ENCODE measurements at regions of chr12 and their contacts with region 1.

Region 1: DNA sequence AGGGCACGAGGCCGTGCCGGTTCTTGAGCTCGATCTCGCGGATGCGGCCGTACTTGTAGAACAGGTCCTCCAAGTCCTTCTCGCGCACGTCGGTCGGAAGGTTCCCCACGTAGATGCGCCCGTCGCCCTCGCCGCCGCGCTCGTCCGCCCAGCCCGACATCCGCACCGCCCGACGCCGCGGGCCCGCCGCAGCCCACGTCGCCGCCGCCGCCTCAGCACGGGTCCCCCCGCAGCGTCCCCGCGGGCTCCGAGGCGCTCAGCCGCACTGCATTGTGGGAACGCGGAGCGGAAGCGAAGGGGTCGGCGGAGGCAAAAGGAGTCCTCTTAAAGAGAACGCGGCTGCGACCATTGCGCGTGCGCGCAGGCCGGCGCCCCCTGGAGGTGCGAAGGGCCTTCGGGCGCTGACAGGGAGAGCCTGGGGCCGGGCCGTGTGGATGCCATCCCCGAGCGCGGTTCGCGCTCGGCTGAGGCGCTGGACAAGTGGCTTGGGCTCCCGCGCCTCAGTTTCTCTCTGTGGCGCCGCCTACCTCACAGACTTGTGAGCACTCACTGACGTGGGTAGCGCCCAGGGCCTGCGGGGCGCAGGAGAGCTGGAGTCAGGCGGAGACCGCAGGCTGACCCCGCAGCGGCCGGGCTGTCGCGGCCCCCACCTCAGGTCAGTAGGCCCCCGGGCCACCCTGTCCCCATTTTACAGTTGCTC is at the start of gene SRSF9:
- DNase-seq: peak; percentile 89 to 99
- H3K4me3 ChIP-seq: peak within 1 kb of the TSS; percentile 76 to 97 (median 78)
- H3K27ac ChIP-seq: peak within 1 kb of the TSS; percentile 96
- H3K4me1 ChIP-seq: peaks cover 0 to 5% (median 0%) of the 10 kb centered on the region in 4 experiments; a peak in 2 of 7 replicates
- H3K27me3 ChIP-seq: no peaks in the 10 kb centered on the region
- CTCF ChIP-seq: peak; percentile 73 to 86 (median 78)
- EP300 ChIP-seq: no peak
- POLR2A ChIP-seq: peak; percentile 66 to 89
- RAD21 ChIP-seq: peak in 1 of 2 experiments; percentile 37; a peak in 2 of 4 replicates
- total RNA-seq, gene SRSF9: 304 and 307 TPM in 2 replicates

Region 2: GRCh38 chr12:120327593-120327992 is 142.0 kb before region 1 on chr12 and contains the start of gene PLA2G1B:
- CTCF ChIA-PET with region 1: interaction called, 11 read pairs
- POLR2A ChIA-PET with region 1: interaction called, 4 read pairs
- DNase-seq: no peak
- H3K4me3 ChIP-seq: no peak within 1 kb of the TSS
- H3K27ac ChIP-seq: no peak within 1 kb of the TSS
- H3K4me1 ChIP-seq: peaks cover 0 to 1% (median 0%) of the 10 kb centered on the region in 4 experiments; a peak in 1 of 7 replicates
- H3K27me3 ChIP-seq: no peaks in the 10 kb centered on the region
- CTCF ChIP-seq: no peak
- EP300 ChIP-seq: no peak
- POLR2A ChIP-seq: no peak
- RAD21 ChIP-seq: no peak
- total RNA-seq, gene PLA2G1B: not detected in 2 replicates

Region 3: GRCh38 chr12:120445911-120446843 is 23.4 kb before region 1 on chr12 and contains the starts of genes GATC and TRIAP1:
- CTCF ChIA-PET with region 1: interaction called, 152 read pairs
- POLR2A ChIA-PET with region 1: interaction called, 365 read pairs
- DNase-seq: peak in 1 of 2 experiments; percentile 99
- H3K4me3 ChIP-seq: peak within 1 kb of the TSS; percentile 84 to 98 (median 98)
- H3K27ac ChIP-seq: peak within 1 kb of the TSS; percentile 94
- H3K4me1 ChIP-seq: peaks cover 0 to 3% (median 1%) of the 10 kb centered on the region in 4 experiments; a peak in 1 of 7 replicates
- H3K27me3 ChIP-seq: no peaks in the 10 kb centered on the region
- CTCF ChIP-seq: no peak
- EP300 ChIP-seq: peak in 1 of 2 experiments; percentile 73; a peak in 1 of 3 replicates
- POLR2A ChIP-seq: peak; percentile 89 to 96
- RAD21 ChIP-seq: no peak
- total RNA-seq, gene GATC: 30.4 and 34.2 TPM in 2 replicates
- total RNA-seq, gene TRIAP1: 58.5 and 63.4 TPM in 2 replicates

Region 4: GRCh38 chr12:120489018-120489417 is 19.4 kb after region 1 on chr12:
- CTCF ChIA-PET with region 1: interaction called, 47 read pairs
- POLR2A ChIA-PET with region 1: interaction called, 119 read pairs
- DNase-seq: no peak
- H3K4me3 ChIP-seq: no peak overlapping the region
- H3K27ac ChIP-seq: no peak overlapping the region
- H3K4me1 ChIP-seq: no peaks in the 10 kb centered on the region
- H3K27me3 ChIP-seq: no peaks in the 10 kb centered on the region; a peak in 1 of 7 replicates
- CTCF ChIP-seq: no peak
- EP300 ChIP-seq: no peak
- POLR2A ChIP-seq: no peak
- RAD21 ChIP-seq: no peak

Region 5: GRCh38 chr12:120504587-120504986 is 35.0 kb after region 1 on chr12:
- CTCF ChIA-PET with region 1: interaction called, 3 read pairs
- POLR2A ChIA-PET with region 1: interaction called, 119 read pairs
- DNase-seq: no peak
- H3K4me3 ChIP-seq: peak overlapping the region in 3 of 4 experiments; percentile 2 to 16 (median 14); a peak in 2 of 8 replicates
- H3K27ac ChIP-seq: no peak overlapping the region
- H3K4me1 ChIP-seq: peaks cover 5 to 9% (median 6%) of the 10 kb centered on the region in 4 experiments; a peak in 5 of 7 replicates
- H3K27me3 ChIP-seq: no peaks in the 10 kb centered on the region
- CTCF ChIP-seq: no peak
- EP300 ChIP-seq: no peak
- POLR2A ChIP-seq: no peak
- RAD21 ChIP-seq: no peak